ENCODE measurements at regions of chr12 and their contacts with region 1.

Region 1: GRCh38 chr12:31406345-31406744 is 80.4 kb upstream of the SINHCAF start:
- DNase-seq: no peak
- ATAC-seq: no peak
- H3K4me3 Mint-ChIP-seq: no peak overlapping the region
- H3K27ac Mint-ChIP-seq: no peak overlapping the region
- H3K4me1 Mint-ChIP-seq: peaks cover 4% of the 10 kb centered on the region
- H3K27me3 Mint-ChIP-seq: peaks cover 7% of the 10 kb centered on the region

Region 2: DNA sequence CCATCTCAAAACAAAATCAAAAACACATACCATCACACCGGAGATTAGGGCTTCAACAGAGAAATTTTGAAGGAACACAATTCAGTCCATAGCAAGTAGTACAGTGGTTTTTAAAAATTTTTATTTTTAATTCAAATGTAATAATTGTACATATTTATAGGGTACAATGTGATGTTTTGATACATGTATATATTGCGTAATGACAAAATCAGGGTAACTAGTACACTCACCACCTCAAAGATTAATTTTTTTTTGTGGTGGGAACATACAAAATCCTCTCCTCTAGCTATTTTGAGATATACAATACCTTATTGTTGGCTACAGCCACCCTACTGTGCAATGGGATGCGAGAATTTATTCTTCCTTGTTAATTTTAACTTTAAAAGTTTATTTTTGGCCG is 227.1 kb after region 1 on chr12:
- CTCF ChIA-PET with region 1: interaction called, 20 read pairs
- POLR2A ChIA-PET with region 1: no interaction called
- DNase-seq: no peak
- ATAC-seq: no peak
- H3K4me3 Mint-ChIP-seq: no peak overlapping the region
- H3K27ac Mint-ChIP-seq: no peak overlapping the region
- H3K4me1 Mint-ChIP-seq: peaks cover 7% of the 10 kb centered on the region
- H3K27me3 Mint-ChIP-seq: no peaks in the 10 kb centered on the region

Region 3: DNA sequence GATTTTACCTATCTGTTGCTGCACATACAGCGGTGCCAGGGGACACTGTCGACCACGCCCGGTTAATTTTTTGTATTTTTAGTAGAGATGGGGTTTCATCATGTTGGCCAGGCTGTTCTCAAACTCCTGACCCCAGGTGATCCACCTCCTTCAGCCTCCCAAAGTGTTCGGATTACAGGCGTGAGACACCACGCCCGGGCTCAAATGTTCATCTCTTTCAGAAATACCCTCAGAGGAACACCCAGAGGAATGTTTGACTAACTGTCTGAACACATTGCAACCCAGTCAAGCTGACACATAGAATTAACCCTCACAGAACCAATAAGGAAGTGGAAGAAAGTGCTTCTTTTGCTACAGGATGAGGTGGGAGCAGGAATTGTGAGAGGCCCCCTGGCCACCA is 238.2 kb after region 1 on chr12:
- CTCF ChIA-PET with region 1: interaction called, 15 read pairs
- POLR2A ChIA-PET with region 1: no interaction called
- DNase-seq: no peak
- ATAC-seq: no peak
- H3K4me3 Mint-ChIP-seq: no peak overlapping the region
- H3K27ac Mint-ChIP-seq: no peak overlapping the region
- H3K4me1 Mint-ChIP-seq: no peaks in the 10 kb centered on the region
- H3K27me3 Mint-ChIP-seq: no peaks in the 10 kb centered on the region